ENCODE measurements at regions of chr13 and their contacts with region 1.

Region 1: DNA sequence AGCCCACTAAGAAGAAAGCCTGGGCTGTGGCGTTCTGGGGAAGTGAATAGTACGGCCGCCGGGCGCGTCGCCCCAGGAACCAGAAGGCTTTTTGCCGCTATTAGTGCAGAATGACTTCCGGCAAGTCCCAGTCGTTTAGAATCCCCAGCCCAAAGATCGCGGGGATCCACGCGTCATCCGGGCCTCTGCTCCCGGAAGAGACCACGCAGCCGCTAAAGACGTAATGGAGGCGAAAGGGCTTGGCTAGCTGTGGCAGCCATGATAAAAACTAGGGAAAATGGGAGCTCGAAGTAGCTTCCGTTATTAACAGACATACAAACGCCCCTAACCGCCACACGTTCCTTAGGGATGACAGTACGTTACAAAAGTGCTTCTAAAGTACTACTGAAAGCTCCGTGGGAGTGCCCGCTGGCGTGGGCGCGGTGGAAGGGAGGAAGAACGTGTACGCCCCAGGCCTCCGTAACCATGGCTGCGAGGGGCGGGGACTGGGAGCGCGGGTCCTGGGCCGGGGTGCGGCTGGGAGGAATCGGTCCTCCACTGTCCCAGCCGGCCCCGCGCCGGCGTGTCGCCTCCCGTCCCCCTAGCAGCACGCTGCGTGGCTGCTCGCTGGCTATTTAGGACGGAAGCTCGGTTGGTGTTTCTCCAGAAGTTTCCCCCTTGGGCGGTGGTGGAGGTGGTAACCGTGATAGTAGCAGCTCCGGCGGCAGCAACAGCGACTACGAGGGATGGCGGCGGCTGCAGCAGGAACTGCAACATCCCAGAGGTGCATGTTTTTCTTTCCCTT is at the start of gene SUGT1:
- DNase-seq: peak; percentile 96
- ATAC-seq: peak; percentile 98
- H3K4me3 Mint-ChIP-seq: no peak within 1 kb of the TSS
- H3K27ac Mint-ChIP-seq: peak within 1 kb of the TSS; percentile 46
- H3K4me1 Mint-ChIP-seq: peaks cover 6% of the 10 kb centered on the region
- H3K27me3 Mint-ChIP-seq: no peaks in the 10 kb centered on the region
- total RNA-seq, gene SUGT1: 36.5 to 41.1 TPM

Region 2: DNA sequence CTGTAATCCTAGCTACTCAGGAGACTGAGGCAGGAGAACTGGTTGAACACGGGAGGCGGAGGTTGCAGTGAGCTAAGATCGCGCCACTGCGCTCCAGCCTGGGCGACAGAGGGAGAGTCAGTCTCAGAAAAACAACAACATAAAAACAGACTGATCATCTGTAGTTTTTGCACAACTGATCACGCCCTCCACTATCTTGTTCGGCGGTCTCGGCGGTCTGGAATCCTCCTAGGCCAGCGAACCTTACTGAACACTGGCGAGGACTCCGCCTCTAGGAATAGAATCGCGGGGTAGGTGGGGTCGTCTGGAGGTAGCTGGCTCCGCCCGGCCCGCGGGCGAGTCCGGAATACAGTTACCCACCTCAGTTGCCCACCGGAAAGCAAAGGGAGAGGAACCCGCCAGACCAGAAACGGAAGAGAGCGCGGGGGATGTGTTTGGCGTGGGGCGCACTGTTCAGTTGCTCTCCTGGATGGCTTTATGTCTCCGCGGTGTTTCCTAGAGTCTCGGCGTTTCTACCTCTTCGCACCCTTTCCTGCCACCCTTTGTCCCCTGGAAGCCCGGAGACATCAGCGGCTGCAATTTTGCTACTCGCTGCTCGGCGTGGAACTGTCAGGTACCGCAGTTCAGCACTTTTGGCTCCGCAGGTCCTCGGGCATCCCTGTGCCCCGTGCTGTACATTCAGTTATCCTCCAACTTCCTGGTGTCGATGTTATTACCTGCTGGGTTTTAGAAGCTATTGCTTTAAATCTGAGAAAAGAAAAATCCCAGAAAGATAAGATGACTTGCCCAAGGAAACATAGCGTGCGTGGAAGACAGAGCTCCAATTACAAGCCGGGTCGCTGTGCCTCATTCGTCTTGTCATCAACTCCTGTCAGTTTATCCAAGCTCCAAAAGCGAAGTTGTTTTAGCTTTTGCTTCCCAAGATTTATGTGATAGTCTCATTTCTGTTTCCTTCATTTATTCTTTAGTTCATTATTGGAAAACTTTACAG is 35.0 kb before region 1 on chr13:
- POLR2A ChIA-PET with region 1: interaction called, 89 read pairs
- DNase-seq: peak; percentile 84
- ATAC-seq: peak; percentile 96
- H3K4me3 Mint-ChIP-seq: peak overlapping the region; percentile 99
- H3K27ac Mint-ChIP-seq: peak overlapping the region; percentile 90
- H3K4me1 Mint-ChIP-seq: peaks cover 20% of the 10 kb centered on the region
- H3K27me3 Mint-ChIP-seq: peaks cover 6% of the 10 kb centered on the region